ENCODE measurements at regions of chr19 and their contacts with region 1.

Region 1: DNA sequence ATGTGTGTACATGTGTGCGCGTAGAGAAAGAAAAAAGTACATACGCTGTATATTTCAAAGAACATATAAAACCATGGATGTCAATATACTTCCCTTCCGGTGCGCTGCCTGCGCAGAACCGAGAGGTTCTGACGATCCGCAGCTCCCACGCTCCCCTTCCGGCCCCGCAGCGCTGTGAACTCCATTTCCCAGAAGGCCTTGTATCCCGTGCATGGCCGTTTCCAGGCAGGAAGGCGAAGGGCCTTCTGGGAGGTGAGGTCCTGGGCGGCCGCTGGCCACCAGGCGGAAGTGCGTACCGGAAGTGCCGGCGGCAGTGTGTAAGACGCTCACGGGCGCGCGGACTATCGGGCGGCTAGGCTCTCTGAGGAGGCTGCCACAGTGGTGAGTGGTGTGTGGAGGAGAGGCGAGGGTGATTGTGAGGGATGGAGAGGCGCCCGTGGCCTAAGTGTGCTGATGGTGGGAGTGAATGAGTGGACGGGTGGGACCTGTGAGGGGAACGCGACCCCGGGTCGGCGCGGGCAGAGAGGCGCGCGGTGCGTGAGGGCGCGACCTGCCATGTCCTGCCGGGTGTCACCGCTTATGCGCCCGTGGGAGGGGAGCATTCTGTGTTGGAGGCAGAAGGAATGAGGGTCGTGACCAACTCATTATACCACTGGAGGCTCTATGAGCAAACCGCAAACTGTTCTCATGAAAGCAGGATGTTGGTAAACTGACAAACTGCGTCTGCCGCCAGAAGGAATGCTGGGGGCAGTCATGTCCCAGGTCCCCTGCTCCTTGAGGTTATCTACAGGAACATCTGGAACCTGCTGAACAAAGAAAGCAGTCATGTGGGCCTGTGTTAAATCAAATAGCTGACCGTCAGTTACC is at the start of gene ERVK3-1:
- DNase-seq: peak; percentile 88 to 98
- H3K4me3 ChIP-seq: peak within 1 kb of the TSS; percentile 77 to 87
- H3K27ac ChIP-seq: peak within 1 kb of the TSS; percentile 84 to 91
- H3K4me1 ChIP-seq: peaks cover 0 to 7% of the 10 kb centered on the region in 2 donors
- H3K27me3 ChIP-seq: no peaks in the 10 kb centered on the region
- CTCF ChIP-seq: peak in 1 of 3 experiments; percentile 48
- total RNA-seq, gene ERVK3-1: 35.0 TPM

Region 2: GRCh38 chr19:57850553-57851017 is 454.7 kb before region 1 on chr19:
- intact Hi-C with region 1: no loop called
- DNase-seq: no peak
- H3K4me3 ChIP-seq: peak overlapping the region; percentile 63 to 79
- H3K27ac ChIP-seq: no peak overlapping the region
- H3K4me1 ChIP-seq: no peaks in the 10 kb centered on the region
- H3K27me3 ChIP-seq: no peaks in the 10 kb centered on the region
- CTCF ChIP-seq: no peak

Region 3: GRCh38 chr19:58037927-58038687 is 267.2 kb before region 1 on chr19:
- intact Hi-C with region 1: no loop called
- DNase-seq: no peak
- H3K4me3 ChIP-seq: no peak overlapping the region
- H3K27ac ChIP-seq: no peak overlapping the region
- H3K4me1 ChIP-seq: no peaks in the 10 kb centered on the region
- H3K27me3 ChIP-seq: peaks cover 5% of the 10 kb centered on the region
- CTCF ChIP-seq: no peak

Region 4: GRCh38 chr19:58097781-58098681 is 207.3 kb before region 1 on chr19 and contains the start of gene ZSCAN18:
- intact Hi-C with region 1: loop called (anchors 1 kb)
- DNase-seq: peak; percentile 90 to 99
- H3K4me3 ChIP-seq: peak within 1 kb of the TSS; percentile 97 to 99
- H3K27ac ChIP-seq: peak within 1 kb of the TSS; percentile 97 to 98
- H3K4me1 ChIP-seq: peaks cover 0 to 9% of the 10 kb centered on the region in 2 donors
- H3K27me3 ChIP-seq: no peaks in the 10 kb centered on the region
- CTCF ChIP-seq: no peak
- total RNA-seq, gene ZSCAN18: 181 TPM

Region 5: DNA sequence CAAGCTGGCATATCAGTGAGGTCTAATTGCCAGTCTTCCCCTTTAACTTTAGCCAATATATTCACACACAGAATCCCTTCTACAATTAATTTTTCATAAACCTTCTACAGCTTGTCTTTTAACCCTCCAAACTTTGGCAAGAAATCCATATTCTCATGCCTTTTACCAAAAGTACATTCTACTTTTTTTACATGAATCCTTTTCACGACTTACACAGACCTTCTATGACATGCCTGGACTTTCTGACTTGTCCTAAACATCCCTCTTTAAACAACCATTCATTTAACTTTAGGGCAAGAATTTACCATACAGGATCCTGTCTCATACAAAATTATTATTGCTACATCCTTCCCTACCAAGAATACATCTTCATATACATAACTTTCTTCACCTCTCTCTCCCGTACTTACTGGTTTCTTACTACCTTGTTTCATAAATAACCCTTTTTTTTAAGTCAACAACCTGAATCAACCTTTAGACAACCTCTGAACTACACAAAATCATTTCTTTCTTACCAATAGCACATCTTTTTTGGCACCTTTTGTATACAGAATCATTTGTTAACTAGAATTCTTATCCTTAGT is 53.1 kb before region 1 on chr19:
- intact Hi-C with region 1: no loop called
- DNase-seq: no peak
- H3K4me3 ChIP-seq: no peak overlapping the region
- H3K27ac ChIP-seq: no peak overlapping the region
- H3K4me1 ChIP-seq: no peaks in the 10 kb centered on the region
- H3K27me3 ChIP-seq: no peaks in the 10 kb centered on the region
- CTCF ChIP-seq: no peak

Region 6: GRCh38 chr19:58278157-58279041 is 26.9 kb before region 1 on chr19 and contains the start of gene ZNF8:
- intact Hi-C with region 1: loop called (anchors 1 kb)
- DNase-seq: peak; percentile 91 to 98
- H3K4me3 ChIP-seq: peak within 1 kb of the TSS; percentile 67 to 96
- H3K27ac ChIP-seq: peak within 1 kb of the TSS; percentile 77 to 92
- H3K4me1 ChIP-seq: no peaks in the 10 kb centered on the region
- H3K27me3 ChIP-seq: no peaks in the 10 kb centered on the region
- CTCF ChIP-seq: peak in 1 of 3 experiments; percentile 14
- total RNA-seq, gene ZNF8: 6.0 TPM

Region 7: DNA sequence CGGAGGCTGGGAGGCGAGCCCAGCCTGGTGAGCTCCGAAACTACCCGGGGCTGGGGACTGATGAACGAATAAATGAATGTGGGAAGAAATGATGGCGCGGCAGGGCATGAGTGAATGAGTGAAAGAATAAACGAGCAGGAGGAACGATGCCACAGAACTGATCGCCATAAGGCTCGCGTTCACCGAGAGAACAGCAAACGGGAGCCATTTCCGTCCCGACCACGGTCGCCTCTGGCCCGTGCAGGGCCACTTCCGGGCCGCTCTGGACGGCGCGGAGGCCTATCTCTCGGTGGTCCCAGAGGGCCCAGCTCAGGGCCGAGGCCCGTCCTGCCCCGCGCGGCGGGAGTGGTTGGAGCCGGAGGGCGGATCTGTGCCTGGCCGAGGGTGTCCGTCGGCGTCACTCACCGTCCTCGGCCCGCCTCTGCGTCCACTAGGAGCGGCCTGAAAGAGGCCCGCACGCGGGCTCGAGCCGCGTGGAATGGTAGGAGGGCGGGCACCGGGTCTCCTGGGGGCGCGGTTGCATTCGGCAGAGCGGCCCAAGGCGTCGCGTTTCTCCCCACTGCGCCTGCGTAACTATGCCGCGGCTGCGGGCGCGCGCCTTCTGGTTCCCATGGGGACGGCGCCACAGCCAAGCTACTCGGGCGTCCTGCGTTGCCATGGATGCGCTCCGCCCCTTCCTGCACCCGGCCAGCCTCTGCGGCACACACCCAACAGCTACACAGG is 57.1 kb after region 1 on chr19 and contains the start of gene ZNF497:
- intact Hi-C with region 1: loop called (anchors 1 kb)
- DNase-seq: peak; percentile 78 to 97
- H3K4me3 ChIP-seq: peak within 1 kb of the TSS; percentile 67 to 74
- H3K27ac ChIP-seq: peak within 1 kb of the TSS; percentile 86 to 94
- H3K4me1 ChIP-seq: peaks cover 0 to 7% of the 10 kb centered on the region in 2 donors
- H3K27me3 ChIP-seq: no peaks in the 10 kb centered on the region
- CTCF ChIP-seq: no peak
- total RNA-seq, gene ZNF497: not detected

Region 8: DNA sequence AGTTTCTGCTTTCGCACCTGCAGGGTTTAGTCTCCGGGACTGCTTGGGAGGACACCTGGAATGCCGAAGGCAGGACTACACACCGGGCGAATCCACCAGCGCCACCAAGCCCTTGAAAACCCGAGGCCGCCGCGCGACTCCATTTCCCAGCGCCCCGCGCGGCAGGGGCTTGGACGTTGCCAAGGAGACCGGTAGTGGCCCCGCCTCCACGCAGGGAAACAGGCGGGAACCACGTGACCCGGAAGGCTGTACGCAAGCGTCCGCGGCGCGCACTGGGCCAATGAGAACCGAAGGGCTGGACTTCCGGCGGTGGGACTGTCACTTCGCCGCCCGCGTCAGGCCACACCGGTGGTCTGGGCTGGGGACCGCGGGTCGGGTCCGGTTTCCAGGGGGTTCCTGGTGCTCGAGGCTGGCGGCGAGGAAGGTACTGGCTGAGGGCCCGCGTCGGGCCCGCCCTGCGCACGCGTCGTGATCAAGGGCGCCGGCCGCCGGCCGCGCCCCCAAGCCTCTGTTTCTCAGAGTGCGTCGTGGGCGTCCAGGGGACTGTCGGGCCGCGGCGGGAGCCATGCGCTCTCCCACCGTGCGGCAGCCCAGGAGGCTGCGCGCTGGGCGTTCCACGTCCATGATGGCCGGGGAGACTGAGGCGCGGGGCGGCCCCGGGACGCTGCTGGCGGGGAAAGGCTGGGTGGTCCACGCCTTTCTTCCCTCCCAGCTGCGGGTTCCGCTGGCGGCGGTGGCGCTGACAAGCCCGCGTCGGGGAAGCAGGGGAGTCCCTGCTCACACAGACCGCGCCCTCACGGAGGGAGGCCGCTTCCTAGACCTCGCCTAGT is 161.7 kb after region 1 on chr19 and contains the start of gene ZNF324:
- intact Hi-C with region 1: no loop called
- DNase-seq: peak; percentile 93 to 99
- H3K4me3 ChIP-seq: peak within 1 kb of the TSS; percentile 95 to 96
- H3K27ac ChIP-seq: peak within 1 kb of the TSS; percentile 84 to 88
- H3K4me1 ChIP-seq: peaks cover 0 to 10% of the 10 kb centered on the region in 2 donors
- H3K27me3 ChIP-seq: no peaks in the 10 kb centered on the region
- CTCF ChIP-seq: no peak
- total RNA-seq, gene ZNF324: 2.1 TPM